Panc1 (cell line): ENCODE measurements at regions of chr12 and their contacts with region 1.

Region 1: DNA sequence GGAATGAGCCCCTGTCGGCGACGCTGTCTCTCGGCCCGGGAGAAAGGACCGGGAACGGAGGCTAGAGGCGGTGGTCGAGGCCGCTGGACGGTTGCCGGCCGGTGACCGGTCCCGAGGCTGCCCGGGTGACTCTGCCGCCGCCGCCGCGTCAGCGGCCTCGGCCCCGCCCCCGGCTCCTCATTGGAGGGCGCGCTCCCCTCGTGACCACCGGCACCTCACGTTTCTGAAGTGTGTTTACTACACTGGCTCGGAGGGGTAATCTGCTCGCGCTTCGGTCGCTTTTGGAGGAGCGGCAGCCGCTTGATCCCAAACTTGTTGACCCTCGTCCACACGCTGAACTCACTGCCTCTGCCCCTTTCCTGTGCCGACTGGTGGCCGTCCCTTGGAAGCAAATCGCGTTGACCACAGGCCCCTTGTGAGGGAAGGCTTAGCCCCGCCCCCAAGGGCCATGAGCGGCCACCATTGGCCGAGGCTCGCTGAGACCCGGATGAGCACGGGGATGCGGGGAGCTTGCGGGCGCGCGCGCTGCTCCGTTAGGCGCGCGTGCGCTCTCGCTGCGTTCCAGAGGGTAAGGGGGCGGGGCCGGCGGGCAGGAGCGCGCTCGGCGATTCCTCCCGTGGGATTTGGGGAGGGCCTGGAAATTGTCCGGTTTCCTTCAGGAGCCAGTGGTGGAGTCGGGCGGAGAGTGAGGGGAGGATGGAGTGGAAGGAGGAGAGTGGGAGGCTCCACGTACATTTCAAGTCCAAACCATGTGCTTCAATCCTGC is at the start of gene CRY1:
- DNase-seq: peak; percentile 83
- ATAC-seq: peak; percentile 94
- H3K4me3 ChIP-seq: peak within 1 kb of the TSS; percentile 93 to 97
- H3K27ac ChIP-seq: peak within 1 kb of the TSS; percentile 98
- H3K4me1 ChIP-seq: peaks cover 15% of the 10 kb centered on the region
- H3K27me3 ChIP-seq: no peaks in the 10 kb centered on the region
- CTCF ChIP-seq: no peak
- total RNA-seq, gene CRY1: 43.8 TPM

Region 2: GRCh38 chr12:106841510-106842302 is 251.9 kb before region 1 on chr12:
- CTCF ChIA-PET with region 1: interaction called, 11 read pairs
- POLR2A ChIA-PET with region 1: no interaction called
- in situ Hi-C with region 1: no loop called
- intact Hi-C with region 1: no loop called
- DNase-seq: no peak
- ATAC-seq: peak; percentile 74
- H3K4me3 ChIP-seq: no peak overlapping the region
- H3K27ac ChIP-seq: no peak overlapping the region
- H3K4me1 ChIP-seq: no peaks in the 10 kb centered on the region
- H3K27me3 ChIP-seq: no peaks in the 10 kb centered on the region
- CTCF ChIP-seq: peak; percentile 65; the same call in 1 of the 2 replicates

Region 3: GRCh38 chr12:107017042-107017441 is 76.6 kb before region 1 on chr12:
- CTCF ChIA-PET with region 1: interaction called, 3 read pairs
- POLR2A ChIA-PET with region 1: interaction called, 12 read pairs
- in situ Hi-C with region 1: no loop called
- intact Hi-C with region 1: no loop called
- DNase-seq: no peak
- ATAC-seq: no peak
- H3K4me3 ChIP-seq: no peak overlapping the region
- H3K27ac ChIP-seq: no peak overlapping the region
- H3K4me1 ChIP-seq: no peaks in the 10 kb centered on the region
- H3K27me3 ChIP-seq: no peaks in the 10 kb centered on the region
- CTCF ChIP-seq: no peak

Region 4: GRCh38 chr12:107109741-107110719 is 16.4 kb after region 1 on chr12:
- CTCF ChIA-PET with region 1: interaction called, 10 read pairs
- POLR2A ChIA-PET with region 1: no interaction called
- in situ Hi-C with region 1: no loop called
- intact Hi-C with region 1: no loop called
- DNase-seq: no peak
- ATAC-seq: no peak
- H3K4me3 ChIP-seq: no peak overlapping the region
- H3K27ac ChIP-seq: no peak overlapping the region
- H3K4me1 ChIP-seq: peaks cover 2% of the 10 kb centered on the region
- H3K27me3 ChIP-seq: peaks cover 12% of the 10 kb centered on the region; the same call in 1 of the 2 replicates
- CTCF ChIP-seq: no peak

Region 5: DNA sequence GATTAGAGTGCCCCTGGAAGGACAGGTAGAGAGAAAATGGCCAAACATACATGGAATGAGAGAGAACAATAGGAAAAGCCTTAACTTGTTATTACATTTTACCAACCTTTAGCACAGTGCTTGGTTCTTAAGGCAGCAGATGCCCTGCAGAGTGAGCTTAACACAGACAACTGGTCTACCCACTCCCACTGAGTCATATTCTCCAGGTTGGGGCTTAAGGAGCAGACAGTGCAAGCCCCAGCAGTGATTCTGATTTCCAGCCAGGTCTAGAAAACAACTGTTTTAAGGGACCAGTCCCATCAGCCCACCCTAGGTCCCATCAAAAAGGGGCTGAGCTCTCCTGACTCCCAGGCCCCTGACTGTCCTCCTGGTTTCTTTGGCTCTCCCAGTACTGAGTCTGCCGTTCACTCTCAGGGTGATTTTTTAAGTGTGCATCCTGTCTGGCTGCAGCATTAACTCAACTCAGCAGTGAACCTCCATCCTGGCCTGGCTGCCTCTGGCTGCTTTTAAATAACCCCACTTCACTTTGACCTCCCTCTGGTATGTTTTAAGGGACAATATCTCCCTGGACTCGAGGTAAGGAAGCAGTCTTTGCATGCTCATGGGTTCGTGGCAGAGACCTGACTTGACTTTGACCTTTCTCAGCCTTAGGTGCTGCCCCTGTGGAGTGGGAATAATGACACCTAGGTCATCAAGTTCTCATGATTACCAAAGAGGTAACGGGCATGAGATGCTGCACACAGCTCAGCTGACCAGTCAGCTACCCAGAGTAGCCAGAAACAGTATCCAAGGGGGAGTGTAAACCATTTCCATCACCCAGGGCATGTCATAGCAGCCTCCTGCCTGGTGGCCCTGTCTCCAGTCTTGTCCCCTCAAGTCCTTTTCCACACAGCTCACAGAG is 381.3 kb after region 1 on chr12:
- CTCF ChIA-PET with region 1: no interaction called
- POLR2A ChIA-PET with region 1: no interaction called
- in situ Hi-C with region 1: no loop called
- intact Hi-C with region 1: no loop called
- DNase-seq: no peak
- ATAC-seq: no peak
- H3K4me3 ChIP-seq: no peak overlapping the region
- H3K27ac ChIP-seq: no peak overlapping the region
- H3K4me1 ChIP-seq: no peaks in the 10 kb centered on the region
- H3K27me3 ChIP-seq: peaks cover 4% of the 10 kb centered on the region; the same call in 1 of the 2 replicates
- CTCF ChIP-seq: no peak